ENCODE measurements at regions of chr2 and their contacts with region 1.

Region 1: DNA sequence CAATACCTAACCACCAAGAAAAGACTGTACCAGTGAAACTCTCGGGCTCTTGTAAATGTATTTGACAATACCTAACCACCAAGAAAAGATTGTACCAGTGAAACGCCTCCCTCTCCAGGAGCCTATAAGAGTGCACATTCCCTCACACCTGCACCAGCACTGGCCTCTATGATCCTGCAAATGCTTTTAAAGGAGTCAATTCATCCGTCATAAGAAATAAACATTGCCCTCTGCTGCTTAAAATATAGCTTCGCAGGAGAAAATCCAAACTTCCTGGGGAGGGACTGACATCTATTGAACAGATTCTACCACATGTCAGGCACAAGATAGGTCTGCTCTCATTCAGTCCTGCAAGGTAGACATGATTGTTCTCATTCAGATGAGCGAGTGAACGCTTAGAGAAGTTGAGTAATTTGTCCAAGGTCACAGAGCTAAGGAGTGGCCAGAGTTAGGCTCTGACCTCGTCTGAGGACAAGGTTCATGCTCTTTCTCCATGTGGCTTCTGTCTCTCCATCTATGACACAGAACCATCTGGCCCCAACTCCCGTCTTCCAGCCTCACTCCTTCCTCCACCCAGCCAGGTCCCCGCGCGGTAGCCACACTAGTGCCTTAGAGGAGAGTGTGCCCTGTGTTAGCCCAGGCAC is 38.7 kb downstream of the MCFD2 start:
- DNase-seq: peak; percentile 41
- H3K4me3 Mint-ChIP-seq: no peak overlapping the region
- H3K27ac Mint-ChIP-seq: no peak overlapping the region
- H3K4me1 Mint-ChIP-seq: peaks cover 13% of the 10 kb centered on the region
- H3K27me3 Mint-ChIP-seq: no peaks in the 10 kb centered on the region
- CTCF ChIP-seq: peak; percentile 51

Region 2: DNA sequence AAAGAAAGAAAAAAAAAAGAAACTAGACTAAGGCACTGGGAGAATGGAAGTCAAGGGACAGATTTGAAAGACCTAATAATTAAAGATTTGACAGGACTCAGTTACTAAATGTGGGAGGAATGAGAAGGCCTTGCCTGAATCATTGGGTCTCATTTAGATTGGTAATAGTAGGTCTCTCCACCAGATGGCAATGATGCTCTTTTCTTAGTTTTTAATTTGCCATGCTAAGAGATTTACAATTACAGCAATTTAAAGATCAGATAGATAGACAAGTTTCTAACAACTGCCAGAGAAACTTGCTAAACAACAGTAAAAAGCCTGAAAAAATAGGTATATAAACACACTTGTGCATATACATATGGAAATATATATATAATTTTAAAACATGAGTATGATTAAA is 244.5 kb before region 1 on chr2:
- CTCF ChIA-PET with region 1: interaction called, 3 read pairs
- intact Hi-C with region 1: loop called (anchors 1 kb)
- DNase-seq: no peak
- H3K4me3 Mint-ChIP-seq: no peak overlapping the region
- H3K27ac Mint-ChIP-seq: no peak overlapping the region
- H3K4me1 Mint-ChIP-seq: no peaks in the 10 kb centered on the region
- H3K27me3 Mint-ChIP-seq: no peaks in the 10 kb centered on the region
- CTCF ChIP-seq: peak; percentile 25

Region 3: GRCh38 chr2:46657042-46657504 is 219.8 kb before region 1 on chr2:
- CTCF ChIA-PET with region 1: interaction called, 12 read pairs
- intact Hi-C with region 1: no loop called
- DNase-seq: no peak
- H3K4me3 Mint-ChIP-seq: no peak overlapping the region
- H3K27ac Mint-ChIP-seq: no peak overlapping the region
- H3K4me1 Mint-ChIP-seq: peaks cover 9% of the 10 kb centered on the region
- H3K27me3 Mint-ChIP-seq: peaks cover 10% of the 10 kb centered on the region
- CTCF ChIP-seq: peak; percentile 49

Region 4: GRCh38 chr2:46776687-46777327 is 100.1 kb before region 1 on chr2:
- CTCF ChIA-PET with region 1: interaction called, 3 read pairs
- intact Hi-C with region 1: loop called (anchors 10 kb)
- DNase-seq: peak; percentile 71
- H3K4me3 Mint-ChIP-seq: no peak overlapping the region
- H3K27ac Mint-ChIP-seq: no peak overlapping the region
- H3K4me1 Mint-ChIP-seq: peaks cover 9% of the 10 kb centered on the region
- H3K27me3 Mint-ChIP-seq: peaks cover under 1% of the 10 kb centered on the region
- CTCF ChIP-seq: peak; percentile 71

Region 5: GRCh38 chr2:46803911-46804670 is 72.8 kb before region 1 on chr2:
- CTCF ChIA-PET with region 1: interaction called, 7 read pairs
- intact Hi-C with region 1: loop called (anchors 2 kb)
- DNase-seq: peak; percentile 75
- H3K4me3 Mint-ChIP-seq: no peak overlapping the region
- H3K27ac Mint-ChIP-seq: peak overlapping the region; percentile 11
- H3K4me1 Mint-ChIP-seq: peaks cover 46% of the 10 kb centered on the region
- H3K27me3 Mint-ChIP-seq: no peaks in the 10 kb centered on the region
- CTCF ChIP-seq: no peak

Measured in Calu3 (cell line).